ENCODE measurements at regions of chr3 and their contacts with region 1.

Region 1: GRCh38 chr3:187616307-187616972 is 53.8 kb downstream of the SST start:
- DNase-seq: peak; percentile 74
- H3K4me3 ChIP-seq: no peak overlapping the region
- H3K27ac ChIP-seq: no peak overlapping the region
- H3K4me1 ChIP-seq: no peaks in the 10 kb centered on the region
- H3K27me3 ChIP-seq: no peaks in the 10 kb centered on the region
- CTCF ChIP-seq: peak; percentile 83

Region 2: DNA sequence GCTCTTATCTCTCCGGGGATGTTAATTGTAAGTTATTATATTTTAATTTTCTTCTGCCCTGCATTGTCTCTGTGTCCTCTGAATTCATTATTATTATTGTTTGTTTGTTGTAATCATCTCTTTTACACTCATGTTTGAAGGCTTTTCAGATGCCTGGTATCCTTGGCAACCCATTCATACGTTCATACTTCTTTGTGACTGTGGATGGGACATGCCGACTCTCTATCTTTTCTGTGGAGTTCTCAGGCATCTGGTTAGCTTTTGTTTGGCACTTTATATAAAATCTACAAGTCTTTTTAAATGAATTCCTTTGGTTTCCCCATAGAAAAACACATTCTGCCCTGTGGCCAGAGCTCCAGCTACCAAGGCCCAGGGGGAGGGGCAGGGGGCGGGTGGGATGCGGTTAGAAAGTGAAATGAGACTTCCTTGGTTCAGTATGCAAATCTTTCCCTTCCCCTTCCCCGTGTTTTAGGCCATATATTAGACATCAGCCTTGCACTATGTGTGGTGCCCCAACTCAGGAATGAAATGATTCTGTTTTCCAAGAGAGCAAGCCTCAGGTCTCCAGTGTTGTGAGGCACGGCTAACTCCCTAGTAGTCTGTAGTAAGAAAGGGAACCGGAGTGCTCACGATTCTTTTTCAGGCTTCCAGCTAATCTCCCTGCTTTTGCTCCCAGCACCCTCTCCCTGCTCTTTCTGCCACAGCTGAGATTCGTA is 25.4 kb before region 1 on chr3:
- CTCF ChIA-PET with region 1: no interaction called
- POLR2A ChIA-PET with region 1: no interaction called
- intact Hi-C with region 1: no loop called
- DNase-seq: no peak
- H3K4me3 ChIP-seq: no peak overlapping the region
- H3K27ac ChIP-seq: no peak overlapping the region
- H3K4me1 ChIP-seq: peaks cover 3% of the 10 kb centered on the region
- H3K27me3 ChIP-seq: no peaks in the 10 kb centered on the region
- CTCF ChIP-seq: no peak

Region 3: GRCh38 chr3:187679638-187680396 is 63.4 kb after region 1 on chr3:
- CTCF ChIA-PET with region 1: interaction called, 15 read pairs
- POLR2A ChIA-PET with region 1: no interaction called
- intact Hi-C with region 1: loop called (anchors 1 kb)
- DNase-seq: peak; percentile 78
- H3K4me3 ChIP-seq: no peak overlapping the region
- H3K27ac ChIP-seq: no peak overlapping the region
- H3K4me1 ChIP-seq: peaks cover 7% of the 10 kb centered on the region
- H3K27me3 ChIP-seq: no peaks in the 10 kb centered on the region
- CTCF ChIP-seq: peak; percentile 95

Region 4: GRCh38 chr3:187714404-187714979 is 98.1 kb after region 1 on chr3:
- CTCF ChIA-PET with region 1: no interaction called
- POLR2A ChIA-PET with region 1: no interaction called
- intact Hi-C with region 1: no loop called
- DNase-seq: peak; percentile 84
- H3K4me3 ChIP-seq: no peak overlapping the region
- H3K27ac ChIP-seq: no peak overlapping the region
- H3K4me1 ChIP-seq: no peaks in the 10 kb centered on the region
- H3K27me3 ChIP-seq: no peaks in the 10 kb centered on the region
- CTCF ChIP-seq: peak; percentile 92

Measured in A673 (cell line).